PC-9 (cell line): ENCODE measurements at regions of chr2 and their contacts with region 1.

Region 1: GRCh38 chr2:237590272-237591140 is at the start of gene RAB17:
- DNase-seq: peak; percentile 91 to 94
- H3K4me3 ChIP-seq: peak within 1 kb of the TSS; percentile 64
- H3K27ac ChIP-seq: peak within 1 kb of the TSS; percentile 85
- H3K4me1 ChIP-seq: peaks cover 28% of the 10 kb centered on the region
- H3K27me3 ChIP-seq: no peaks in the 10 kb centered on the region
- CTCF ChIP-seq: no peak
- total RNA-seq, gene RAB17: 86.3 and 88.1 TPM in 2 replicates

Region 2: GRCh38 chr2:237512774-237513466 is 77.6 kb before region 1 on chr2:
- CTCF ChIA-PET with region 1: no interaction called
- POLR2A ChIA-PET with region 1: no interaction called
- intact Hi-C with region 1: no loop called
- DNase-seq: peak; percentile 80 to 91
- H3K4me3 ChIP-seq: no peak overlapping the region
- H3K27ac ChIP-seq: no peak overlapping the region
- H3K4me1 ChIP-seq: no peaks in the 10 kb centered on the region
- H3K27me3 ChIP-seq: no peaks in the 10 kb centered on the region
- CTCF ChIP-seq: peak; percentile 99

Region 3: GRCh38 chr2:237616734-237617586 is 26.5 kb after region 1 on chr2:
- CTCF ChIA-PET with region 1: no interaction called
- POLR2A ChIA-PET with region 1: interaction called, 11 read pairs
- intact Hi-C with region 1: loop called (anchors 1 kb)
- DNase-seq: peak in 1 of 2 experiments; percentile 50
- H3K4me3 ChIP-seq: no peak overlapping the region
- H3K27ac ChIP-seq: no peak overlapping the region
- H3K4me1 ChIP-seq: peaks cover 19% of the 10 kb centered on the region
- H3K27me3 ChIP-seq: no peaks in the 10 kb centered on the region
- CTCF ChIP-seq: no peak

Region 4: GRCh38 chr2:237650455-237650850 is 59.9 kb after region 1 on chr2:
- CTCF ChIA-PET with region 1: no interaction called
- POLR2A ChIA-PET with region 1: interaction called, 8 read pairs
- intact Hi-C with region 1: loop called (anchors 1 kb)
- DNase-seq: peak; percentile 96 to 97
- H3K4me3 ChIP-seq: no peak overlapping the region
- H3K27ac ChIP-seq: no peak overlapping the region
- H3K4me1 ChIP-seq: peaks cover 19% of the 10 kb centered on the region
- H3K27me3 ChIP-seq: no peaks in the 10 kb centered on the region
- CTCF ChIP-seq: no peak

Region 5: GRCh38 chr2:237662671-237663093 is 72.2 kb after region 1 on chr2:
- CTCF ChIA-PET with region 1: no interaction called
- POLR2A ChIA-PET with region 1: no interaction called
- intact Hi-C with region 1: loop called (anchors 2 kb)
- DNase-seq: peak; percentile 95 to 96
- H3K4me3 ChIP-seq: peak overlapping the region; percentile 9; the same call in 1 of the 2 replicates
- H3K27ac ChIP-seq: no peak overlapping the region
- H3K4me1 ChIP-seq: peaks cover 46% of the 10 kb centered on the region
- H3K27me3 ChIP-seq: no peaks in the 10 kb centered on the region
- CTCF ChIP-seq: no peak

Region 6: DNA sequence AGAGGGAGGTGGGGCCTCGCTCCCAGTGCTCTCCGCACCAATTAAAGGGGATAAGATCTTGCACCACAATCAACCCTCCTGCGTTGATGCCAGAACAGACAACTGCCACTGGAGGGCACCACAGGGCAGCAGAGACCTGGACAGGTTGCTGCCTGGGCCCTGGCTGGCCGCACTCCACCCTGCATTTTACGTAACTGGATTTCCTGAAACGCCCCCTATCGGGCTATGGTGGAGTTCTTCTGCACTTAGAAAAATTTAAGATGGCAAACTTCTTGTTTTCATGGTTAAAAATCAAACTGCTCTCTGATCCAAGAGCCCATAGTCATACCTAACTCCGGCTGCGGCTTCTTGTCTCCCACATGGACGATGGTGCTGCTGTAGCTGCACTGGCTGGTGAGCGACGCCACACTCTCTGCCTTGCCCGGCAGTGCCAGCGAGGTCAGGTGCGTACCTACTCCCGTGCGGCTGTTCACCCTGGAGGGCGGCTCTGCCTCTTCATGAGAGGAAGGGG is 666.1 kb after region 1 on chr2:
- CTCF ChIA-PET with region 1: no interaction called
- POLR2A ChIA-PET with region 1: no interaction called
- intact Hi-C with region 1: loop called (anchors 5 kb)
- DNase-seq: peak; percentile 84 to 96
- H3K4me3 ChIP-seq: no peak overlapping the region
- H3K27ac ChIP-seq: no peak overlapping the region
- H3K4me1 ChIP-seq: 0 out of 2 replicates have a peak, but pooled peaks cover 5% of the 10 kb centered on the region
- H3K27me3 ChIP-seq: no peaks in the 10 kb centered on the region
- CTCF ChIP-seq: peak; percentile 99